ENCODE measurements at regions of chr1 and their contacts with region 1.

Region 1: GRCh38 chr1:247331172-247331991 is at the start of gene ZNF496:
- DNase-seq: peak; percentile 92
- H3K4me3 Mint-ChIP-seq: peak within 1 kb of the TSS; percentile 92
- H3K27ac Mint-ChIP-seq: peak within 1 kb of the TSS; percentile 88
- H3K4me1 Mint-ChIP-seq: peaks cover 16% of the 10 kb centered on the region
- H3K27me3 Mint-ChIP-seq: peaks cover 2% of the 10 kb centered on the region
- total RNA-seq, gene ZNF496: 14.2 and 15.7 TPM in 2 replicates

Region 2: GRCh38 chr1:247037483-247038320 is 293.7 kb before region 1 on chr1:
- intact Hi-C with region 1: no loop called
- DNase-seq: no peak
- H3K4me3 Mint-ChIP-seq: no peak overlapping the region
- H3K27ac Mint-ChIP-seq: no peak overlapping the region
- H3K4me1 Mint-ChIP-seq: no peaks in the 10 kb centered on the region
- H3K27me3 Mint-ChIP-seq: no peaks in the 10 kb centered on the region

Region 3: DNA sequence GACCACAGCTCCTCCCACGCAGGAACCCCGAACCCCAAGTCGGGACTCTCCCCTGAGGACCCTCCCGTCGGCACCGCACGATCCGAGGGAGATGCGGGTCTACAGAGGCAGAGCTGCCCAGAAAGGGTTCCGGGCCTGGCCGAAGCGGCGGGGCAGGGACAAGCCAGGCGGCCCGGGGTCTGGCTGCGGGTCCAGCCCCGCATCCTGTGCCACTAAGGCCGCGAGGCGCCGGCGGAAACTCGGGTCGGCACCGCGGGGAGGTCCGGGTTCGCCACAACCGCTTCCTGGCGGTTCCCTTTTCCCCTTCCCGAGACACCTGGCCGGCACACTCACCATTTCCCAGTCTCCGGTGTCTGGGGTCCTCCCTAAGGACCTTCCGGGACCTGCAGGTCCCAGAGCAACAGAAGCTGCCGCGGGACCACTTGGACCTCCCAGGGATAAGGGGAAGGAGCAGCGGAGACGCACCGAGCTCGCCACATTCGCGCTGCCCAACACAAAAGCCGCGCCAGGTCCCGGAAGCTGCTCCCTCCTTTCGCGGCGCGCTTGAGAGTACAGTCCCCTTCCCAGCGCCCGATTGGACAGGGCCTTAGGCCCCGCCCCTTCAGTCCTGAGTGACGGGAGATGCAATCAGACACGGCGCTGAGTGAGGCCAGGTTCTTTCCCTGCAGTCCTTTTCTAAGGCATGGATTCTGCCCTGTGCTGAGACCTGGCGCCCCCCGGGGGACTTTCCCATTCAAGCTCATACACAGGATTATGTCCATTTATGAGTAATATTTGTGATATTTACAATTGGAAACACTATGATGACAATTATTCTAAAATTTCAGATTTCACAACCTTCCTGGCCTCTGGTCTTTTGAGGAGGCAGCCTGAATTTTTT is 252.9 kb before region 1 on chr1 and contains the start of gene ZNF670:
- intact Hi-C with region 1: loop called (anchors 2 kb)
- DNase-seq: peak; percentile 96
- H3K4me3 Mint-ChIP-seq: peak within 1 kb of the TSS; percentile 94
- H3K27ac Mint-ChIP-seq: peak within 1 kb of the TSS; percentile 85
- H3K4me1 Mint-ChIP-seq: peaks cover 12% of the 10 kb centered on the region
- H3K27me3 Mint-ChIP-seq: peaks cover 7% of the 10 kb centered on the region
- total RNA-seq, gene ZNF670: 2.8 TPM in 2 replicates

Region 4: DNA sequence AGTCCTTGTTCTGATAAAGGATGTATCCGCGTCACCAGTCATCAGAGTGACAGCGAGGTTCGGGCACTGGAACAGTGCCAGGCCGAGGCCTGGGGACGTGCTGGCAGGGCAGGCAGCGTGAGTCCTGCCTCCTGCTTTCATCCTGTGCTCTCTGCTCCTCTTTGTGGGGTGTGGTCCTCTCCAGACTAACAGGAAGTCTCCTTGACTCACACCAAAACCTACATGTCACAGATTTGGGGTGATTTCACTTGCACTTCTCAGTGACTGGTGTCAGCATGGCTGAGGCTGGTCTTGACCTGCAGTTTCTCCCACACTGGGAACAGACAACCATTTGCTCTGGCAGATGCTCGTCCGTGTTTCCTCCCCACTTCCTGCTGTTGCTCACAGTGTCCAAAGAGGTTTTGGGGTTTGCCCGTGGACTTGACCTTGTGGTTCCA is 75.8 kb after region 1 on chr1:
- intact Hi-C with region 1: loop called (anchors 5 kb)
- DNase-seq: peak; percentile 86
- H3K4me3 Mint-ChIP-seq: peak overlapping the region; percentile 57
- H3K27ac Mint-ChIP-seq: peak overlapping the region; percentile 49
- H3K4me1 Mint-ChIP-seq: peaks cover 31% of the 10 kb centered on the region
- H3K27me3 Mint-ChIP-seq: peaks cover 22% of the 10 kb centered on the region

Region 5: DNA sequence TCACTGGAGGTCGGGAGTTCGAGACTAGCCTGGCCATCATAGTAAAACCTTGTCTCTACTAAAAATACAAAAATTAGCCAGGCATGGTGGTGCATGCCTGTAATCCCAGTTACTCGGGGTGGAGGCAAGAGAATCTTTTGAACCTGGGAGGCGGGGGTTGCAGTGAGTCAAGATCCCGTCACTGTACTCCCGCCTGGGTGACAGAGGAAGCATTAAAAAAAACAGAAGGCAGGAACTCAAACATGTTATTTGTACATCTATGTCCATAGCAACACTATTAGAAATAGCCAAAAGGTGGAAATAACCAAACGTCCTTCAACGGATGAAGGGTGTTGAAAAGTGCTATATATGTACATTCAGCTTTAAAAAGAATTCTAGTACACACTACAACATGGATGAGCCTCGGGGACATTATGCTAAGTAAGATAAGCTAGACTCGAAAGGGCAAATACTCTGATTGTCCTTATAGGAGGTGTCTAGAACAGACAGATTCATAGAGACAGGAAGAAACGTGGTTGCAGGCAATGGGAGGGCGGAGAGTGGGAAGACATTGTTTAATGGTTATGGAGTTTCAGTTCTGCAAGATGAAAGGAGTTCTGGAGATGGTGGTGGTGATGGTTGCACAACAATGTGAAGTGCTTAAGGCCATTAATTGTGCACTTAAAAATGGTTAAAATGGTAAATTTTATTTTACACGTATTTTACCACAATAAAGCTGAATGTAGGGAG is 103.8 kb after region 1 on chr1:
- intact Hi-C with region 1: no loop called
- DNase-seq: no peak
- H3K4me3 Mint-ChIP-seq: no peak overlapping the region
- H3K27ac Mint-ChIP-seq: no peak overlapping the region
- H3K4me1 Mint-ChIP-seq: peaks cover 4% of the 10 kb centered on the region
- H3K27me3 Mint-ChIP-seq: no peaks in the 10 kb centered on the region

Region 6: GRCh38 chr1:247669221-247669620 is 337.8 kb after region 1 on chr1:
- intact Hi-C with region 1: no loop called
- DNase-seq: no peak
- H3K4me3 Mint-ChIP-seq: no peak overlapping the region
- H3K27ac Mint-ChIP-seq: no peak overlapping the region
- H3K4me1 Mint-ChIP-seq: no peaks in the 10 kb centered on the region
- H3K27me3 Mint-ChIP-seq: no peaks in the 10 kb centered on the region

Measured in activated CD4-positive, alpha-beta T cell treated with anti-CD3 and anti-CD28 coated beads, Interleukin-2, amount 10 ng/mL, durations not matched to agents 24 days and 14 days (primary cell).